CD8-positive, alpha-beta T cell (primary cell): ENCODE measurements at regions of chr17 and their contacts with region 1.

Region 1: DNA sequence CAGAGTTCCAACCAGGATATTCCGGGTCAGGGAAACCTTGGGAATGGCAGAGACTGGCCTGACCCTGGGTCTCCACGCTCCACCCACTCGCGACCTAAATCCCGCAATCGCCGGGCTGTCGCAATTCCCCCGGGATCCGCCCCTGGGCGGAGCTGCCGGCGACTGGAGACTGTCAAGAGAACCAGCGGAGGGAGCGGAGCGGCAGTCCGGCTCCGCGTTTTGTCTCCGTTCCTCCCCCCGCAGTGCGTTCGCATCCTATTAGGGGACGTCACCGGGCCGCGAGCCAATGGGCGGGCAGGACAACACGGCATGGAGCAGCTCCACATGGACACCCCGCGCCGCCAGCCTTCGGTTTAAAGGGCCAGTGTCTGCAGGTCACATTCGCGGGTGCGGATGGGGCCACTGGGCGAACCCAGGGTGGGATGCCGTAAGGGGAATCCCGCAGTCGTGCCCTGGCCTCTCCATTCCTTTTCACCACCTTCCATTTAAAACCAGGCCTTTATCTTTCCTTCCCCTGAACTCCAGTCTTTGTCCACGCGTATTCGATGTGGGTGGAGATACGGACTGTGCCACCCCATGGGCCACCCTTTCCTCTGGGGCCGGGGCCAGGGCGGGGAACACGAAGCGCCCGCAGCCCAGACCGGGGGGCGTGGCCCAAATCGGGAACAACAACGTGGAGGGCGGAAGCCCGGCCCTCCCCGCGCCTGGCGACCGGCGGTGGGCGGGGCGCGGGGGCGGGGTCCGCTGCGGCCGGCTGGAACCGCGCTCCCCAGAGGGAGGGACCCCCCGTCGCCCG is 764 bp upstream of the MNT start:
- DNase-seq: peak; percentile 99 to 100 (median 99)
- ATAC-seq: peak; percentile 59
- H3K4me3 ChIP-seq: peak overlapping the region; percentile 65 to 71
- H3K4me3 Mint-ChIP-seq: peak overlapping the region; percentile 99
- H3K27ac ChIP-seq: peak overlapping the region; percentile 99
- H3K27ac Mint-ChIP-seq: peak overlapping the region; percentile 100
- H3K4me1 ChIP-seq: peaks cover 35% of the 10 kb centered on the region
- H3K4me1 Mint-ChIP-seq: peaks cover 36% of the 10 kb centered on the region
- H3K27me3 ChIP-seq: no peaks in the 10 kb centered on the region
- H3K27me3 Mint-ChIP-seq: no peaks in the 10 kb centered on the region
- CTCF ChIP-seq: no peak

Region 2: DNA sequence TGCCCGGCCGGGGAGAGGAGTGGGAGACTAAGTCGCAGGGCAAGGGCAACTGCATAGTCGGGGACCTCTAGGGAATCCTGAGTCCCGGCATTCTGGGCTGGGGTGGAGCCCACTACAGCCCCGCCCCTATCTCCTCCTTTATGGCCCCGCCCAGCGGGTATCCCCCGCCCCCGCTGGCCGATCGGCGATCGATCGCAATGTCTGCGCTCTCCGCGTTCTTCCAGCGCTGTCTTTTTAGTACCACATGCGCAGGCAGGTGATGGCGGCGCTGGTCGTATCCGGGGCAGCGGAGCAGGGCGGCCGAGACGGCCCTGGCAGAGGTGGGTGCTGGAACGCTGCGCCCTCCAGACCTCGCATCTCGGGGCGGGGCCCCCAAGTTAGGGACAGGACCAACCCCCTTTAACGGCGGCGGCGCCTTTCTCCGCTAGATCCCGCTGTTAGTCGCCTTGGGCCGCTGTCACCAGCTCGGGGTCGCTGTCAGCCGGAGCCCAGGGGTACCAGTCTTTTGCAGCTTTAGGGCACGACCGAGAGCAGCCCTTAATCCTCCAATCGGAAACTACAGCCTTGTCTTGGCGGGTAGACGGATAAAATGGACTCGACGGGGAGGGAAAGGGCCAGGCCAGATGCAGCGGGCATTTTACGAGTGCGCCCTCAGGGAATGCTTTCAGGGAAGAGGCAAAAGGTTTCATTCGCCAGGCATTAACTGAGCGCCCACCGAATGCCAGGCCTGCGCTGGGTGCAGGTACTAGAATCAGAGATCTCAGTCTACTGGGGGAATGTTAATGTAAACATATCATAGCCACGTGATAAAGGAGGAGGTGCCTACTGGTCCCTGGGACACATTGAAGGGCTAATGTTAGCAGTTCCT is 371.5 kb before region 1 on chr17 and contains the start of gene DPH1:
- CTCF ChIA-PET with region 1: no interaction called
- POLR2A ChIA-PET with region 1: no interaction called
- intact Hi-C with region 1: loop called in 1 of 2 experiments (anchors 5 kb)
- DNase-seq: peak; percentile 66 to 92 (median 85)
- ATAC-seq: peak; percentile 81
- H3K4me3 ChIP-seq: peak within 1 kb of the TSS; percentile 93 to 100
- H3K4me3 Mint-ChIP-seq: peak within 1 kb of the TSS; percentile 97
- H3K27ac ChIP-seq: peak within 1 kb of the TSS; percentile 73 to 81
- H3K27ac Mint-ChIP-seq: peak within 1 kb of the TSS; percentile 86
- H3K4me1 ChIP-seq: peaks cover 34% of the 10 kb centered on the region
- H3K4me1 Mint-ChIP-seq: peaks cover 34% of the 10 kb centered on the region
- H3K27me3 ChIP-seq: peaks cover 0 to 18% of the 10 kb centered on the region in 2 experiments
- H3K27me3 Mint-ChIP-seq: peaks cover 12% of the 10 kb centered on the region
- CTCF ChIP-seq: no peak
- total RNA-seq, gene DPH1: 128 to 149 TPM

Region 3: DNA sequence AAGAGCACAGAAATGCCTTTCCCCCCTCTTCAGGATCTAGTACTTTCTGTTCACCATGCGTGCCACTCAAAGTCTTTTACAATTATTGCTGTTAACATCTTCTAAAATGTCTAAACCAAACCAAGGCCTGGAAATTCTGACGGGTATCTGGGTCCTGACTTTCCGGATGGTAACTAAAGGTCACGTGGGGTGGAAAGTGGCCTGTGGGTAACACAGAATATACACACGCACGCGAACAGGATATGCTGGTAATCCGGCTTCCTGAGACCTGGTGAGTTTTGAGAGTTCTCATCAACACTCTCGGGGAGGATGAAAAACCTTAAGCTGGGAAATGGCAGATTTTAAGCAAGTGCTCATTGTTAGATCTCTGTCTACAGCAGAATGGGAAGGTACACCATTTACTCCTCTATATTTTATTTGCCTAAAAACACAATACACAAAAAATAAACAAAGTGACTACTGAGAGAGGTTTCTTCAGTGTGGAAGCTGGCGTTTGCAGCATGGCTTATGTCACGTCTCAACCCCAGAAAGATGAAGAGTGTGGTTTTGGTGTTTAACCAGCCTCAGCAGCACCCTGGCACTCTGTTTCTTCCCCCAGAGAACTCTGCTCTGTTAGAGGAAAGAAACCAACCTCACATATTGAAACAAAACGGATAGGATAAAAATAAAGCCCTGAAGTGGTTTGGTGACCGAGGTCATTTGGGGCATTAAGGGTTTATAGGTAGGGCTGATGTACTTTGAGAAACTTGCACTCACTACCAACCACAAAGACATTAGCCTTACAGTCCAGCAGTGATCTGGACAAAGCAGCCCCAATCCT is 135.4 kb before region 1 on chr17:
- CTCF ChIA-PET with region 1: no interaction called
- POLR2A ChIA-PET with region 1: interaction called, 4 read pairs
- intact Hi-C with region 1: loop called (anchors 1 kb)
- DNase-seq: peak; percentile 58 to 97 (median 84)
- ATAC-seq: peak; percentile 79
- H3K4me3 ChIP-seq: peak overlapping the region; percentile 34 to 51
- H3K4me3 Mint-ChIP-seq: peak overlapping the region; percentile 58
- H3K27ac ChIP-seq: peak overlapping the region; percentile 88 to 95
- H3K27ac Mint-ChIP-seq: peak overlapping the region; percentile 96
- H3K4me1 ChIP-seq: peaks cover 86% of the 10 kb centered on the region
- H3K4me1 Mint-ChIP-seq: peaks cover 83% of the 10 kb centered on the region
- H3K27me3 ChIP-seq: no peaks in the 10 kb centered on the region
- H3K27me3 Mint-ChIP-seq: no peaks in the 10 kb centered on the region
- CTCF ChIP-seq: no peak

Region 4: DNA sequence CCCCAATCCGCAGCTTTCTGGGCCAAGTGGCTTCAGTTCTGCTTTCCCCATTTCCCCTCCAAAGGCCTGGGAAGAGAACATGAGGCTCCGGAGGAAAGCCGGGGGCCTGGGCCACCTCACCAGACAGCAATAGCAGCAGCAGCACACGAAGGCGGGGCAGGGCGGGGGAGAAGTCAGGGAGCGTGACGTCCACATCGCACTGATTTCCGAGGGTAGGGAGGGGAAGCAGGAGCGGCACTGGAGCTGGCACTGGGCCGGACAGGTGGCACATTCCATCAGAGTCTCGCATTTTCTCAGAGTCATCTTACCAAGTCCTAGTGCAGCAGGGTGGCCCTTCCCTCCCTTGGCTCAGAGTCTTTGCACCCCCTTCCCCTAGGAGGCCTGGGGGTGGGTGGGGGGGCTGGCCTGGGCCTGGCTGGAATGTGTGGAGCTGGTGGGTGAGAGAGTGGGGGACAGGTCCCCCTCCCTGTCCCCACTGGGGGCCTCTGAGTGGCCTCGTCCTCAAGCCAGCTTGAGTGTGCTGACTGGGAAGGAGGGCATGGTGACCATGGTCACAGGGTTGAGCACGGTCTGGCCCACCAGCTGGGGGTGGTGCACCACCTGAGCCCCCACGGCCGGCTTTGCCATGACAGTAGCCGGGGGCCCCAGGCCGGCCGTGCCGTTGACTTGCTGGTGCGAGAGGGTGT is 15.1 kb before region 1 on chr17:
- CTCF ChIA-PET with region 1: interaction called, 35 read pairs
- POLR2A ChIA-PET with region 1: interaction called, 67 read pairs
- intact Hi-C with region 1: loop called (anchors 1 kb)
- DNase-seq: no peak
- ATAC-seq: no peak
- H3K4me3 ChIP-seq: no peak overlapping the region
- H3K4me3 Mint-ChIP-seq: no peak overlapping the region
- H3K27ac ChIP-seq: no peak overlapping the region
- H3K27ac Mint-ChIP-seq: no peak overlapping the region
- H3K4me1 ChIP-seq: peaks cover 25% of the 10 kb centered on the region
- H3K4me1 Mint-ChIP-seq: peaks cover 24% of the 10 kb centered on the region
- H3K27me3 ChIP-seq: no peaks in the 10 kb centered on the region
- H3K27me3 Mint-ChIP-seq: no peaks in the 10 kb centered on the region
- CTCF ChIP-seq: no peak

Region 5: GRCh38 chr17:2711601-2712299 is 310.1 kb after region 1 on chr17 and contains the start of gene CLUH:
- CTCF ChIA-PET with region 1: no interaction called
- POLR2A ChIA-PET with region 1: no interaction called
- intact Hi-C with region 1: loop called in 1 of 2 experiments (anchors 2 kb)
- DNase-seq: peak; percentile 90 to 98 (median 94)
- ATAC-seq: peak; percentile 93
- H3K4me3 ChIP-seq: peak within 1 kb of the TSS; percentile 64 to 84
- H3K4me3 Mint-ChIP-seq: peak within 1 kb of the TSS; percentile 88
- H3K27ac ChIP-seq: peak within 1 kb of the TSS; percentile 41 to 47
- H3K27ac Mint-ChIP-seq: peak within 1 kb of the TSS; percentile 77
- H3K4me1 ChIP-seq: peaks cover 45% of the 10 kb centered on the region
- H3K4me1 Mint-ChIP-seq: peaks cover 35% of the 10 kb centered on the region
- H3K27me3 ChIP-seq: no peaks in the 10 kb centered on the region
- H3K27me3 Mint-ChIP-seq: no peaks in the 10 kb centered on the region
- CTCF ChIP-seq: no peak
- total RNA-seq, gene CLUH: 50.8 to 51.1 TPM